Activated naive CD4-positive, alpha-beta T cell treated with anti-CD3 and anti-CD28 coated beads for 36 hours (primary cell): ENCODE measurements at regions of chr11 and their contacts with region 1.

Region 1: GRCh38 chr11:47213985-47214564 is 699 bp upstream of the DDB2 start:
- DNase-seq: peak; percentile 95
- H3K4me3 Mint-ChIP-seq: peak overlapping the region; percentile 87
- H3K27ac Mint-ChIP-seq: peak overlapping the region; percentile 97
- H3K4me1 Mint-ChIP-seq: peaks cover 30% of the 10 kb centered on the region
- H3K27me3 Mint-ChIP-seq: no peaks in the 10 kb centered on the region

Region 2: DNA sequence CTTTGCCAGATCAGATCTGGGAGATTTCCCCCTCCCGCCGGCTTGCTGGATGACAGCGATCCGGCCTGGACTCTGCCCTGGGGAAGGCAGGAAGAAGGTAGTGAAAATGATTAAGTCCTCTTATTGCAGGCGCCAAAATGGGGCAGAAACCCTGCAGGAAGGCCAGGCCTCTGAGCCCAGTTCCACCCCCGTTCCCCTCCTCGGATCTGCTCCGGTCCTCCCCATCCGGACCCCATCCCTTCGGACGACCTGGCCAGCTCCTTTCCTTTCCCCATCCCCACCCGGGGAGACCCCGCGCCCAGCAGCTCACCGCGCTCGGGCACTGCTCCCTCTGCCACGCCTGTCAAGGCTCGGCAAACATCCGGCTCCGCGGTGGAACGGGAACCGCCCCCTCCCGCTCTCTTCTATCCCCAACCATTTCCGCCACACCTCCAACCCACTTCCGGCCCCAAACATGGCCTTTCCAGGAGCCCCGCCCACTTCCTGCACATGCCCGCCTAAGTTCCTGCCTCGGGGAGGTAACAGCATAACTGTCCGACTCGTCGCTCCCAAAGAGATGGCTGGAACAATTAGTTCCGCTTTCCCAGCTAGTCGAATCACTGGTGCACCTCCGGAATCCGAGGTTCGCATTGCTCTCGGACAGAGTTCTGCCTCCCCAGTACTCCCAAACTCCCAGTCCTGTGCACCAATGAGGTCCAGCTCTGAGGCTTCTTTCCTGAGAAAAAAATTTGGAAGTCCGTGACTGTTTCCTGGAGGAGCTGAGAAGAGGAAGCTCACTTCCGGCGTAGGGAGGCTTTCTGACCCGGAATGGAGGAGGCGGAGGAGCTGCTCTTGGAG is 513.6 kb before region 1 on chr11 and contains the starts of genes ARHGAP1 and ZNF408:
- CTCF ChIA-PET with region 1: no interaction called
- intact Hi-C with region 1: loop called (anchors 1 kb)
- DNase-seq: peak; percentile 100
- H3K4me3 Mint-ChIP-seq: peak within 1 kb of the TSS; percentile 97
- H3K27ac Mint-ChIP-seq: peak within 1 kb of the TSS; percentile 97
- H3K4me1 Mint-ChIP-seq: peaks cover 45% of the 10 kb centered on the region
- H3K27me3 Mint-ChIP-seq: no peaks in the 10 kb centered on the region
- total RNA-seq, gene ARHGAP1: 31.2 to 32.6 TPM
- total RNA-seq, gene ZNF408: 7.3 to 7.6 TPM

Region 3: DNA sequence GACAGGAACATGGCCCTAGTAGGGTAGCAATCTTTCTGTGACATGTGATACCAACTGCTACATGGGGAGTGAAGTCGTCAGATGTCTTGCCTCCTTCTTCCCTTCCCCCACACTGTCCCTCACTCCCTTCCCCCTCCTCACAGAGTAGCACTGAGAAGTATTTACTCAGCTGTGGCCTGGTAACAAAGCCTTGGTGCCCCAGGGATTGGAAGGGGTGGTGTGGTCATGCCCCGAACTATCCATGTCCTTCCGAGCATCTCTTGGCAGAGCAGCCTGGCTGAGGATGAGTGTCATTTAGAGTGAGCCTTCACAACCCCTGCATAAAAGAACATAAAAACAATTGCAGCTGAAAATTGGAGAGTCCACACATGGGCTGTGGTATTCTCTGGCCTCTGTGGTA is 83.5 kb before region 1 on chr11:
- CTCF ChIA-PET with region 1: no interaction called
- intact Hi-C with region 1: no loop called
- DNase-seq: no peak
- H3K4me3 Mint-ChIP-seq: no peak overlapping the region
- H3K27ac Mint-ChIP-seq: no peak overlapping the region
- H3K4me1 Mint-ChIP-seq: no peaks in the 10 kb centered on the region
- H3K27me3 Mint-ChIP-seq: no peaks in the 10 kb centered on the region

Region 4: DNA sequence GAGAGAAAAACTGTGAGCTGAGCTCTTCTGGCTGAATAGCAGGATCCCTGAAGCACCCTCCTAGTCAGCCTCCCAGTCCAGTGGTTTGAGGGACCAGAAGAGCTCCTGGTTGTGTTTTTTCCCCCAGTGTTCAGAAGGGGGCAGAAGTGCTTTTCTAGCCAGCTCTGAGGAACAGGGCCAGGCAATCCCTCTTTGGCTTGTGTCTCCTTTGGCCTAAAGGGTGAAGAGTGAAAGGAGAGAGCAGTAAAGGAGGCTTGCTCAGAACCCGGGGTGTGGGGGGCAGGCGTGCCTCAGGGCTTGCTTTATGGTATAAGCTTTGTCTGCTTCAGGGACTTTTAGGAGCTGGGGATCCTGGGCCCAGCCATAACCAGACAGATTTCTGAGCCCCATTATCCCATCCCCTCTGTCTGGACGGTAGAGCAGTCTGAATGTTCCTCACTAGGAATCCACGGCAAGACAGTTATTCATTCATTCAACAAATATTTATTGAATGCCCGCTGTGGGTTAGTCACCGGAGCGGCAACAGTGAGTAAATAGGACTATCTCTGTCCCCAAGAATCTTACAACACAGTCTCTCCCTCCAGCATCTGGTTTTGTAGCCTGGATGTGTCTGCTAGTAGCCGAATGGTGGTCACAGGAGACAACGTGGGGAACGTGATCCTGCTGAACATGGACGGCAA is 20.1 kb after region 1 on chr11:
- CTCF ChIA-PET with region 1: interaction called, 4 read pairs
- intact Hi-C with region 1: loop called (anchors 1 kb)
- DNase-seq: peak; percentile 38
- H3K4me3 Mint-ChIP-seq: peak overlapping the region; percentile 3
- H3K27ac Mint-ChIP-seq: peak overlapping the region; percentile 77
- H3K4me1 Mint-ChIP-seq: peaks cover 30% of the 10 kb centered on the region
- H3K27me3 Mint-ChIP-seq: no peaks in the 10 kb centered on the region

Region 5: GRCh38 chr11:47407746-47408590 is 193.9 kb after region 1 on chr11 and contains the start of gene SLC39A13:
- CTCF ChIA-PET with region 1: interaction called, 5 read pairs
- intact Hi-C with region 1: loop called (anchors 1 kb)
- DNase-seq: peak; percentile 91
- H3K4me3 Mint-ChIP-seq: peak within 1 kb of the TSS; percentile 92
- H3K27ac Mint-ChIP-seq: peak within 1 kb of the TSS; percentile 92
- H3K4me1 Mint-ChIP-seq: peaks cover 25% of the 10 kb centered on the region
- H3K27me3 Mint-ChIP-seq: no peaks in the 10 kb centered on the region
- total RNA-seq, gene SLC39A13: 9.2 TPM

Region 6: GRCh38 chr11:47642099-47642855 is 428.2 kb after region 1 on chr11 and contains the start of gene MTCH2:
- CTCF ChIA-PET with region 1: no interaction called
- intact Hi-C with region 1: loop called (anchors 1 kb)
- DNase-seq: peak; percentile 97
- H3K4me3 Mint-ChIP-seq: peak within 1 kb of the TSS; percentile 91
- H3K27ac Mint-ChIP-seq: peak within 1 kb of the TSS; percentile 81
- H3K4me1 Mint-ChIP-seq: peaks cover 19% of the 10 kb centered on the region
- H3K27me3 Mint-ChIP-seq: no peaks in the 10 kb centered on the region
- total RNA-seq, gene MTCH2: 93.7 to 95.1 TPM